PC-9 (cell line): ENCODE measurements at regions of chr9 and their contacts with region 1.

Region 1: DNA sequence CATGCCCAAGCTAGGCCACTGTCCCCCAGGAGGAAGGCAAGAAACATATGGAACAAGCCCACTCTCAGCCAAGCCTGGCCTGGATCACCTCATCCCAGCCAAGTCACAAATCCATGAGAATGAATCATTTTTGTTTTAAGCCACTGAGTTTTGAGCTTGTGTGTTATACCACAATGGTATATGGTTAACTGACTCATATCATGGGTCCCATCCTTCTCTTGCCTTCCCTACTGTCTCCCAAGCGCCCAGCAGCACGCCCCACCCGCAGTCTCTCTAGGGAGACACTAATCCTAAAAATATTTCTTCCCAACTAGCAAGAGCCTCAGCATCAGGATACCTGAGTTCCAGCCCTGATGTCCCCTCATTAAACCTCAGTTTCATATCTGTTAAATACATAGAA is 248.1 kb downstream of the CDK5RAP2 start:
- DNase-seq: no peak
- H3K4me3 ChIP-seq: no peak overlapping the region
- H3K27ac ChIP-seq: no peak overlapping the region
- H3K4me1 ChIP-seq: no peaks in the 10 kb centered on the region
- H3K27me3 ChIP-seq: peaks cover 66% of the 10 kb centered on the region
- CTCF ChIP-seq: no peak

Region 2: DNA sequence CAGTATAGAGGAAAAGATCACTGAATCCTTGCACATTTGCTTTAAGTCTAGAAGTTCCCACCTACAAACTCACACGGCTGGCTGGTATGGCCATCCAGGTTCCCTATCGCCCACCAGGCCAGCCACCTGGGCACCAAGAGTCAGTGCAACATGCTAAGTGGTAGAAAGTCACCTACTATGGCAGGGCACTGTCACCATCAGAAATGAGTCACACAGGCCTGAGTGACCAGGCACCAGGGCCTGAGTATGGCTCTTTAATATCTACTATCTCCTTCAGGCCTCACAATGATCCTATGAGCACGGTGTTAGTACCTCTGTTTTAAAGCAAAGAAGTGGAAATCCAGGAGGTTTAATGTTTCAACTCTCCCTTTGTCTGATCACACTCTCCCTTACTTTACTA is 91.9 kb after region 1 on chr9:
- CTCF ChIA-PET with region 1: no interaction called
- POLR2A ChIA-PET with region 1: interaction called, 10 read pairs
- intact Hi-C with region 1: no loop called
- DNase-seq: no peak
- H3K4me3 ChIP-seq: no peak overlapping the region
- H3K27ac ChIP-seq: 0 out of 2 replicates have a peak overlapping the region, but pooled peaks have one; percentile 18
- H3K4me1 ChIP-seq: peaks cover 11% of the 10 kb centered on the region
- H3K27me3 ChIP-seq: no peaks in the 10 kb centered on the region
- CTCF ChIP-seq: no peak